ENCODE measurements at regions of chr5 and their contacts with region 1.

Region 1: GRCh38 chr5:40688127-40688761 is 8.5 kb downstream of the PTGER4 start:
- DNase-seq: peak; percentile 60 to 89
- ATAC-seq: peak; percentile 89 to 96 (median 92)
- H3K4me3 ChIP-seq: peak overlapping the region in 7 of 10 donors; percentile 77 to 98 (median 93)
- H3K27ac ChIP-seq: peak overlapping the region in 9 of 10 donors; percentile 15 to 96 (median 44)
- H3K4me1 ChIP-seq: peaks cover 0 to 68% (median 45%) of the 10 kb centered on the region in 9 donors
- H3K27me3 ChIP-seq: peaks cover 0 to 5% (median 0%) of the 10 kb centered on the region in 7 donors
- CTCF ChIP-seq: peak; percentile 78 to 93 (median 87)

Region 2: DNA sequence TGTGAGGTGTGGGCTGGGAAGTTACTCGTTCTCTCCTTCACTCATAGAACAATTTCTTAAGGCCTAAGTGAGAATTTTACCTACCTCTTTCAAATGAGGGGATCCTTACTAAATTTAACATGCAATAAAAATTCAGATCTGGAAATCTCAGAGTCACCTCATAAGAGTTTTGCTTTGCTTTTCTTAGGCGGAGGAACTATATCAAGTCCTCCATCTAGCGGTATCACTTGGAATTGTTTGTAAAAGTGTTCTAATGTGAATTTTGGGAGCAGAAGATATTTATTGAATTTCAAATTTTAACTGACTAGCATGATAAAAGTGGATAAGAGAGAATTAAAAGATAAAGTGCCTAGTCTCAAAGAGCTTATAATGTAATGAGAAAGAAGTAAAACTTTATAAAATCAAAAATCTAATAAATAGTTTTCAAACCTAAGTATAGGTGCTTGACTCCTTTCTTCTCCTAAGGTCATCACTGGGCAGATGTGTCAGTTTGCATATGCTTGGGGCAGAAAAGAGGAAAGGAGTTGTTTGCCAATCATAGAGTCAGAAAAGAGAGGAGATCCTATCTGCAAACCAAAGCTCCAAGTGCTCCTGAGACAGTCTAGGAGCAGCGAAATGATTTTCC is 1117.7 kb before region 1 on chr5:
- intact Hi-C with region 1: loop called in 6 of 10 experiments (anchors 5 to 10 kb)
- DNase-seq: no peak
- ATAC-seq: no peak
- H3K4me3 ChIP-seq: no peak overlapping the region
- H3K27ac ChIP-seq: no peak overlapping the region
- H3K4me1 ChIP-seq: peaks cover 0 to 8% (median 0%) of the 10 kb centered on the region in 9 donors
- H3K27me3 ChIP-seq: peaks cover 0 to 13% (median 0%) of the 10 kb centered on the region in 7 donors
- CTCF ChIP-seq: peak; percentile 42 to 78 (median 65)

Region 3: GRCh38 chr5:39714036-39714698 is 974.1 kb before region 1 on chr5:
- intact Hi-C with region 1: loop called in 7 of 10 experiments (anchors 5 to 10 kb)
- DNase-seq: peak in 1 of 2 donors; percentile 7
- ATAC-seq: peak in 2 of 8 donors; percentile 55 to 59
- H3K4me3 ChIP-seq: no peak overlapping the region
- H3K27ac ChIP-seq: no peak overlapping the region
- H3K4me1 ChIP-seq: no peaks in the 10 kb centered on the region
- H3K27me3 ChIP-seq: no peaks in the 10 kb centered on the region
- CTCF ChIP-seq: peak; percentile 15 to 73 (median 61)

Region 4: GRCh38 chr5:40021007-40021406 is 667.2 kb before region 1 on chr5:
- intact Hi-C with region 1: loop called in 1 of 10 experiments (anchors 5 kb)
- DNase-seq: no peak
- ATAC-seq: no peak
- H3K4me3 ChIP-seq: no peak overlapping the region
- H3K27ac ChIP-seq: no peak overlapping the region
- H3K4me1 ChIP-seq: no peaks in the 10 kb centered on the region
- H3K27me3 ChIP-seq: no peaks in the 10 kb centered on the region
- CTCF ChIP-seq: peak in 1 of 9 donors; percentile 14

Region 5: DNA sequence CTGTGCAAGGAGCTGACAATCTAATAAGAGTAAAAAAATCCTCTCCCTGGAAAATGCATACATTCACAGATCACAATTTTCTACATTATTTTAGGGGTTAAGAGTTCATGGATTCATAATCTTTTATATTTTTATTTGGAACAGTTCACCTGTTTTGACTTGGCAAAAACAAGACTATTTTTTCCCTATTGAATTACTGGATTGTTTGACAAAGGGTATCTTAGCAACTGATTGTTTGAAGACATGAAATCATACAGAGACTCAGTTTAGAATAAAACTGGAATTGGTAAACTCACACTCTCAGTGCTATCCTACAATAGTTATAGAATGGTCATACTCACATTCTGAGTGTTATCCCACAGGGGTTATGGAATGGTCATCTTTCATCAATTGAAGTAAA is 366.7 kb before region 1 on chr5:
- intact Hi-C with region 1: loop called in 1 of 10 experiments (anchors 5 kb)
- DNase-seq: no peak
- ATAC-seq: no peak
- H3K4me3 ChIP-seq: no peak overlapping the region
- H3K27ac ChIP-seq: no peak overlapping the region
- H3K4me1 ChIP-seq: peaks cover 0 to 27% (median 0%) of the 10 kb centered on the region in 9 donors
- H3K27me3 ChIP-seq: no peaks in the 10 kb centered on the region
- CTCF ChIP-seq: no peak

Region 6: DNA sequence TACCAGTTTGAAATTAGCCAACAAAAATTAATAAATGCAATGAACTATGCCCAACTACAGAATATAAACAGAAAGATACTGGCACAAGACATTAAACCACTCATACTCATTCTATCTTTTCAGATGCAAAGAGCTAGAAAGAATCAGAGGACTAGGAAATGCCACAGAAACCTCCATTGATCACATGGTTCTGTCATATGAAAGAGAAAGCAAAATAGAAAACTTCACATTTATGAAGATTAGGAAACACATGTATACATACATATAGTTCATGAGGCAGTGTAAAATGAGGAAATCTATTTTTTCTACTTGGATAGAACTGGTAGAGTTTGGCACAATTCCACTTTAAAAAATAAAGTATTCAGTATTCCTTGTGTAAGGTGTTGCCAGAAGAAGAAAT is 283.6 kb before region 1 on chr5:
- intact Hi-C with region 1: loop called in 4 of 10 experiments (anchors 10 kb)
- DNase-seq: no peak
- ATAC-seq: no peak
- H3K4me3 ChIP-seq: no peak overlapping the region
- H3K27ac ChIP-seq: peak overlapping the region in 4 of 10 donors; percentile 9 to 88 (median 54)
- H3K4me1 ChIP-seq: peaks cover 5 to 66% (median 34%) of the 10 kb centered on the region in 9 donors
- H3K27me3 ChIP-seq: no peaks in the 10 kb centered on the region
- CTCF ChIP-seq: no peak

Region 7: GRCh38 chr5:40437452-40437861 is 250.8 kb before region 1 on chr5:
- intact Hi-C with region 1: loop called in 1 of 10 experiments (anchors 10 kb)
- DNase-seq: no peak
- ATAC-seq: peak in 2 of 8 donors; percentile 33 to 41
- H3K4me3 ChIP-seq: no peak overlapping the region
- H3K27ac ChIP-seq: peak overlapping the region in 1 of 10 donors; percentile 61
- H3K4me1 ChIP-seq: peaks cover 0 to 28% (median 0%) of the 10 kb centered on the region in 9 donors
- H3K27me3 ChIP-seq: no peaks in the 10 kb centered on the region
- CTCF ChIP-seq: no peak

Region 8: DNA sequence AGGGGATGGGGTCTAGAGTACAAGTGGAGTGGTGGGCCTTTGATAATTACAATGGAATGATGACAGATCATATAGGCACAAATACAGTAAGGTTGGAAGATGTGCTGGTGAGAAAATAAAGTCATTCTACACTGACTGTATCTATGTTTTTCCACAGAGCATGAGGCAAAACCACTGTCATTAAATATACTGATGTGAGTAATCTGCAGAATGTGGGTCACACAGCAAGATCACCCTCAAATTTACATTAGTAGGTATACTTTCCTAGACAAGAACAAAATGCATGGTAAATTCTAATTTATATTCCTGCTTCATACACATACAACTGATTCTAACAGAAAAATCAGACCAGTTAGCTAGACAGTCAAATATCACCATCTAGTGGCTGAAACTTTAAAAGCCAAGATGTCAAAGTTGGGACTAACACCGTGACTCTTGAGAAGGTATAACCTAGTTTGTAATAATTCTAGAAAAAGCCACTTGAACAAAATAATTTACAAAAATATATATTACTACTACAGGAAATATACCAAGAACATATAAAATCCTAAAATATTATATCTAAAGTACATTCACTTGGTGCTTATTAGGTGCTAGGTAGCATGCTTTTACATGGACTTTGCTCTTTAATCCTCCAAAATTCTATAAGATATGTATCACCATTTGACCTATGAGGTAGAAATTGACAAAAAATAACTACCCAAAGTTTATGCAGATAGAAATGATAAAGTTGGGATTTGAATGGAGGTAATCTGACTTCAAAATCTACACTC is 48.0 kb after region 1 on chr5:
- intact Hi-C with region 1: no loop called
- DNase-seq: no peak
- ATAC-seq: peak in 5 of 8 donors; percentile 64 to 75 (median 71)
- H3K4me3 ChIP-seq: no peak overlapping the region
- H3K27ac ChIP-seq: no peak overlapping the region
- H3K4me1 ChIP-seq: peaks cover 6 to 37% (median 31%) of the 10 kb centered on the region in 9 donors
- H3K27me3 ChIP-seq: no peaks in the 10 kb centered on the region
- CTCF ChIP-seq: peak; percentile 61 to 88 (median 78)